MCF 10A (cell line): ENCODE measurements at regions of chr11 and their contacts with region 1.

Region 1: GRCh38 chr11:111446404-111447111 is 65.6 kb downstream of the BTG4 start:
- DNase-seq: peak; percentile 90
- H3K4me3 Mint-ChIP-seq: no peak overlapping the region
- H3K27ac Mint-ChIP-seq: no peak overlapping the region
- H3K4me1 Mint-ChIP-seq: peaks cover 8% of the 10 kb centered on the region
- H3K27me3 Mint-ChIP-seq: peaks cover 13% of the 10 kb centered on the region
- CTCF ChIP-seq: peak; percentile 79

Region 2: DNA sequence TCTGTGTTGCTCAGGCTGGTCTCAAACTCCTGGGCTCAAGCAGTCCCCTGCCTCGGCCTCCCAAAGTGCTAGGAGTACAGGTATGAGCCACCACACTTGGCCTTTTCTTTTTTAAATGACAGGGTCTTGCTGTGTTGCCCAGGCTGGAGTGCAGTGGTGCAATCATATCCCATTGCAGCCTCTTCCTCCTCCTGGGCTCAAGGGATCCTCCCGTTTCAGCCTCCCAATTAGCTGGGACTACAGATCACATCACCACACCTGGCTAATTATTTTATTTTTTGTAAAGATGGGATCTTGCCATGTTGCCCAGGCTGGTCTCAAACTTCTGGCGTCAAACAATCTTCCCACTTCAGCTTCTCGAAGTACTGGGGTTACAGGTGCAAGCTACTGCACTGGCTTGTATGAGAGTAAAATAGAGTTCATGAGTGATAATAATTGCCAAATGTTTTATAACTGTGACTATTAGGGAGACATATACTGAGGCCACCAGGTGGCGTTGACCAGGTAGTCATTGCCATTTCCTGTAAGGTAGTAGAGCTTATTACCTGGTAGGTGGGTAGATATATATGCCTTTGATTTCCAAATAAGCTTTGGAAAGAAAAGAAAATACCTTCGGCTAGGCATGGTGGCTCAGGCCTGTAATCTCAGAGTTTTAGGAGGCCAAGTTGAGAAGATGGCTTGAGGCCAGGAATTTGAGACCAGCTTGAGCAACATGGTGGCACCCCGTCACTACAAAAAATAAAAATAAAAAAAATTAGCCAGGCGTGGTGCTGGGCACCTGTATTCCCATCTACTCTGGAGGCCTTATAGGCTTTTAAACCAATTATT is 1011.4 kb before region 1 on chr11:
- CTCF ChIA-PET with region 1: interaction called, 5 read pairs
- POLR2A ChIA-PET with region 1: no interaction called
- intact Hi-C with region 1: loop called (anchors 1 kb)
- DNase-seq: peak; percentile 58
- H3K4me3 Mint-ChIP-seq: no peak overlapping the region
- H3K27ac Mint-ChIP-seq: no peak overlapping the region
- H3K4me1 Mint-ChIP-seq: peaks cover 40% of the 10 kb centered on the region
- H3K27me3 Mint-ChIP-seq: no peaks in the 10 kb centered on the region
- CTCF ChIP-seq: peak; percentile 37

Region 3: DNA sequence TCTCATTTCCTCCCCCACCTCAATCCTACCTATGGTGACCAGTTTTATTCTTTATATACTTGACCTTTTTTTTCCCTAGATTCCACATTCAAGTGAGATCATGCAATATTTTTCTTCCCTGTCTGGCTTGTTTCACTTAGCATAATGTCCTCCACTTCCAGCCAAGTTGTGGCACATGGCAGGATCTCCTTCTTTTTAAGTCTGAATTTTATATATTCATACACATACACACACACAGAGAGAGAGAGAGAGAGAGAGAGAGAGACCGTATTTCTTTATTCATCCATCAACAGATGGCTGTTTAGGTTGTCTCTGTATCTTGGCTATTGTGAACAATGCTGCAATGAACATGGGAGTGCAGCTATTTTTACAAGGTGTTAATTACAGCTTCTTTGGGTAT is 199.6 kb before region 1 on chr11:
- CTCF ChIA-PET with region 1: no interaction called
- POLR2A ChIA-PET with region 1: no interaction called
- intact Hi-C with region 1: no loop called
- DNase-seq: no peak
- H3K4me3 Mint-ChIP-seq: no peak overlapping the region
- H3K27ac Mint-ChIP-seq: no peak overlapping the region
- H3K4me1 Mint-ChIP-seq: no peaks in the 10 kb centered on the region
- H3K27me3 Mint-ChIP-seq: peaks cover 56% of the 10 kb centered on the region
- CTCF ChIP-seq: no peak

Region 4: GRCh38 chr11:111272420-111272819 is 174.1 kb before region 1 on chr11:
- CTCF ChIA-PET with region 1: interaction called, 10 read pairs
- POLR2A ChIA-PET with region 1: no interaction called
- intact Hi-C with region 1: no loop called
- DNase-seq: no peak
- H3K4me3 Mint-ChIP-seq: no peak overlapping the region
- H3K27ac Mint-ChIP-seq: no peak overlapping the region
- H3K4me1 Mint-ChIP-seq: no peaks in the 10 kb centered on the region
- H3K27me3 Mint-ChIP-seq: peaks cover 50% of the 10 kb centered on the region
- CTCF ChIP-seq: no peak

Region 5: GRCh38 chr11:111291769-111292168 is 154.8 kb before region 1 on chr11:
- CTCF ChIA-PET with region 1: interaction called, 12 read pairs
- POLR2A ChIA-PET with region 1: interaction called, 3 read pairs
- intact Hi-C with region 1: loop called (anchors 1 kb)
- DNase-seq: no peak
- H3K4me3 Mint-ChIP-seq: no peak overlapping the region
- H3K27ac Mint-ChIP-seq: no peak overlapping the region
- H3K4me1 Mint-ChIP-seq: no peaks in the 10 kb centered on the region
- H3K27me3 Mint-ChIP-seq: no peaks in the 10 kb centered on the region
- CTCF ChIP-seq: no peak

Region 6: GRCh38 chr11:111429066-111429506 is 17.5 kb before region 1 on chr11:
- CTCF ChIA-PET with region 1: interaction called, 42 read pairs
- POLR2A ChIA-PET with region 1: interaction called, 7 read pairs
- intact Hi-C with region 1: no loop called
- DNase-seq: peak; percentile 82
- H3K4me3 Mint-ChIP-seq: no peak overlapping the region
- H3K27ac Mint-ChIP-seq: no peak overlapping the region
- H3K4me1 Mint-ChIP-seq: peaks cover 22% of the 10 kb centered on the region
- H3K27me3 Mint-ChIP-seq: no peaks in the 10 kb centered on the region
- CTCF ChIP-seq: peak; percentile 74